A673 (cell line): ENCODE measurements at regions of chr2 and their contacts with region 1.

Region 1: GRCh38 chr2:28566521-28567041 is 70.7 kb downstream of the PLB1 start:
- DNase-seq: peak; percentile 90
- H3K4me3 ChIP-seq: peak overlapping the region; percentile 55
- H3K27ac ChIP-seq: no peak overlapping the region
- H3K4me1 ChIP-seq: no peaks in the 10 kb centered on the region
- H3K27me3 ChIP-seq: no peaks in the 10 kb centered on the region
- CTCF ChIP-seq: peak; percentile 100

Region 2: GRCh38 chr2:28552045-28552823 is 14.3 kb before region 1 on chr2:
- CTCF ChIA-PET with region 1: interaction called, 11 read pairs
- POLR2A ChIA-PET with region 1: no interaction called
- intact Hi-C with region 1: no loop called
- DNase-seq: no peak
- H3K4me3 ChIP-seq: no peak overlapping the region
- H3K27ac ChIP-seq: no peak overlapping the region
- H3K4me1 ChIP-seq: no peaks in the 10 kb centered on the region
- H3K27me3 ChIP-seq: no peaks in the 10 kb centered on the region
- CTCF ChIP-seq: no peak

Region 3: GRCh38 chr2:28751252-28751955 is 184.8 kb after region 1 on chr2 and contains the start of gene PPP1CB:
- CTCF ChIA-PET with region 1: no interaction called
- POLR2A ChIA-PET with region 1: no interaction called
- intact Hi-C with region 1: loop called (anchors 5 kb)
- DNase-seq: peak; percentile 97
- H3K4me3 ChIP-seq: peak within 1 kb of the TSS; percentile 91
- H3K27ac ChIP-seq: peak within 1 kb of the TSS; percentile 98
- H3K4me1 ChIP-seq: peaks cover 26% of the 10 kb centered on the region
- H3K27me3 ChIP-seq: no peaks in the 10 kb centered on the region
- CTCF ChIP-seq: 0 out of 2 replicates have a peak, but pooled peaks have one; percentile 21
- total RNA-seq, gene PPP1CB: 167 and 181 TPM in 2 replicates

Region 4: GRCh38 chr2:28894470-28895177 is 328.0 kb after region 1 on chr2 and contains the start of gene WDR43:
- CTCF ChIA-PET with region 1: no interaction called
- POLR2A ChIA-PET with region 1: no interaction called
- intact Hi-C with region 1: loop called (anchors 10 kb)
- DNase-seq: peak; percentile 99
- H3K4me3 ChIP-seq: peak within 1 kb of the TSS; percentile 100
- H3K27ac ChIP-seq: peak within 1 kb of the TSS; percentile 93
- H3K4me1 ChIP-seq: peaks cover 27% of the 10 kb centered on the region
- H3K27me3 ChIP-seq: peaks cover 10% of the 10 kb centered on the region
- CTCF ChIP-seq: no peak
- total RNA-seq, gene WDR43: 121 and 145 TPM in 2 replicates

Region 5: GRCh38 chr2:29014811-29015421 is 448.3 kb after region 1 on chr2:
- CTCF ChIA-PET with region 1: interaction called, 13 read pairs
- POLR2A ChIA-PET with region 1: no interaction called
- intact Hi-C with region 1: no loop called
- DNase-seq: peak; percentile 28
- H3K4me3 ChIP-seq: no peak overlapping the region
- H3K27ac ChIP-seq: no peak overlapping the region
- H3K4me1 ChIP-seq: peaks cover 16% of the 10 kb centered on the region
- H3K27me3 ChIP-seq: no peaks in the 10 kb centered on the region
- CTCF ChIP-seq: no peak